ENCODE measurements at regions of chr20 and their contacts with region 1.

Region 1: GRCh38 chr20:57680131-57680716 is 29.6 kb downstream of the PMEPA1 start:
- DNase-seq: no peak
- ATAC-seq: peak; percentile 21

Region 2: GRCh38 chr20:57180406-57181353 is 499.5 kb before region 1 on chr20:
- intact Hi-C with region 1: loop called (anchors 5 kb)
- DNase-seq: no peak
- ATAC-seq: no peak

Region 3: DNA sequence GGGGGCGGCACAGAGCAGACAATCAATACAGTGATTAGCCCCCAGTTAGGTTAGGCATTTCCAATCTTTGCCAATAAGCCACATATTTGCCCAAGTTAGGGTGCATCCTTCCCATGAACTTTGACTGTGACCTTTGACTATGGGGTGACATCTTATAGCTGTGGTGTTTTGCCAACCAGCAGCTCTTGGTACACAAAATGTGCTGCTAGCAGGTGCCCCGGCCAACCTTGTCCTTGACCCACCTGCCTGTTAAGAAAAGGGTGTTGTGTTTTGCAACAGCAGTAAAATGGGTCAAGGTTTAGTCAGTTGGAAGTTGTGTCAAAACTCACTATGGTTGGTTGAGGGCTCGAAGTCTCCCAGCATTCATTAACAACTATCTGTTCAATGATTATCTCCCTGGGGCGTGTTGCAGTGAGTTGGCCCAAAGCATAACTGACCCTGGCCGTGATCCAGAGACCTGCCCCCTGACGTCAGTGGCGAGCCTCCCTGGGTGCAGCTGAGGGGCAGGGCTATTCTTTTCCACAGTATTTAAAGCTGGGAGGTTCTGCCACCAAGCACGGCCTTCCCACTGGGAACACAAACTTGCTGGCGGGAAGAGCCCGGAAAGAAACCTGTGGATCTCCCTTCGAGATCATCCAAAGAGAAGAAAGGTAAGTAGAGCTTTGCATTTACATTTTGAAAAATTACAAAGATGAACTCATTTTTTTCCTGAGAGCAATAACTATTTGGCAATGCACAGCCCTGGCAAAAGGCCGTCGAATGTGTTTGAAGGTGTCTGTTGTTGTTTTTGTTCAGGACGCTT is 119.5 kb before region 1 on chr20 and contains the start of gene PCK1:
- intact Hi-C with region 1: no loop called
- DNase-seq: peak; percentile 81
- ATAC-seq: peak; percentile 90
- total RNA-seq, gene PCK1: 5.3 TPM

Measured in sciatic nerve (tissue), 2 donors.